IMR-90 (cell line): ENCODE measurements at regions of chr11 and their contacts with region 1.

Region 1: DNA sequence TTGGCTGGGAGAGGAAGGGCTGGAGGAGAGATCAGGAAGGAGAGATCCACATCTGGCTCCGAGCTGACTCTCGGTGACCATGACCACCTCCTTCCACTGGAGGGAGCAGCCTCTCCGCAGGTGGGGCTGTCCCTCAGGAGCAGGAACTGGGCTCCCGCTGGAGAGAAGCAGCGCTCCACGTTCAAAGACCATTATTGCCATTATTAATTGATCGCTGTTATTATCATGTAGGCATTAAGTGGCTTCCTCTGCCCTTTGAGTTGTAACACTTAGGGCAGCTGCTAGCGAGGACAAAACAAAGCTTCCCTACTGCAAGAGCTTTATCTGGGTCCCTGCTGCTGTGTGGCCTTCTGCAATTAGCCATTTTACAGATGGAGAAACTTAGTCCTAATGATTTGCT is 251.9 kb downstream of the ST3GAL4 start:
- DNase-seq: peak; percentile 66
- ATAC-seq: peak; percentile 98
- H3K4me3 ChIP-seq: no peak overlapping the region
- H3K27ac ChIP-seq: no peak overlapping the region
- H3K4me1 ChIP-seq: no peaks in the 10 kb centered on the region
- H3K27me3 ChIP-seq: no peaks in the 10 kb centered on the region
- CTCF ChIP-seq: peak; percentile 90
- POLR2A ChIP-seq: peak; percentile 48; the same call in 1 of the 2 replicates
- RAD21 ChIP-seq: peak; percentile 99

Region 2: DNA sequence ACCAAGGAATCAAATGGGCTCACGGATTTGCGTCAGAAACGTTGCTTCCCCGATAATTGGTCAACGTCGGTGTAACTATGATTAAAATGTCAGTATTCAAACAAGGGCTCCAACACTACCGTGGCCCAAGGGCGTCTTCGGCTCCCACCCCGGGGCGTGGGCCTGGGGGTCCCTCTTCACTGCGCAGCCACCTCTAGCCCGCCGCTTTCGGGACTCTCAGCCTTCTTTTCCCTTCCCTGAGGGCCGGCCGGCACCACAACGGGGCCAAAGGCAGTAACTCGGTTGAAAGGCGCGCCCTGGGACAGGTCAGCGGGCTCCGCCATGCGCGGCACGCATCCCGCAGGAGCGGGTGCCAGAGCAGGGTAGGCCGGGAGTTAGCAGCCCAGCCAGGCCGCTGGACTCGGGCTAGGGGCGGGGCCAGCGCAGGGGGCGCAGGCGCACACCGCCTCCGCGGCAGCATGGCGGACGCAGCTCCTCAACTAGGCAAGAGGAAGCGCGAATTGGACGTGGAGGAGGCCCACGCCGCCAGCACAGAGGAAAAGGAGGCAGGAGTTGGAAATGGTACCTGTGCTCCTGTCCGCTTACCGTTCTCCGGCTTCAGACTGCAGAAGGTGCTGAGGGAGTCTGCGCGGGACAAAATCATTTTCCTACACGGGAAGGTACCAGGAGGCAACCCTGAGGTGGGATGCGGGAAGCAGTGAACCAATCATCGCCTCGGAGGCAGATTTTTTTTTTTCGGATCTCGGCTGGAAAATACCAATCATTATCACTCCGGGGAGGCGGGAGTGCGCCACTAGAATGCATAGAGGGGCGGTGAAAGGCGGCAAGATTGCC is 303.5 kb before region 1 on chr11 and contains the start of gene DCPS:
- CTCF ChIA-PET with region 1: no interaction called
- POLR2A ChIA-PET with region 1: no interaction called
- dilution Hi-C with region 1: no loop called
- in situ Hi-C with region 1: loop called (anchors 10 kb)
- intact Hi-C with region 1: no loop called
- DNase-seq: peak; percentile 88
- ATAC-seq: peak; percentile 99
- H3K4me3 ChIP-seq: peak within 1 kb of the TSS; percentile 55
- H3K27ac ChIP-seq: peak within 1 kb of the TSS; percentile 85
- H3K4me1 ChIP-seq: peaks cover 3% of the 10 kb centered on the region; the same call in 1 of the 2 replicates
- H3K27me3 ChIP-seq: no peaks in the 10 kb centered on the region
- CTCF ChIP-seq: no peak
- POLR2A ChIP-seq: peak; percentile 90
- RAD21 ChIP-seq: no peak
- total RNA-seq, gene DCPS: 18.6 and 19.7 TPM in 2 replicates

Region 3: DNA sequence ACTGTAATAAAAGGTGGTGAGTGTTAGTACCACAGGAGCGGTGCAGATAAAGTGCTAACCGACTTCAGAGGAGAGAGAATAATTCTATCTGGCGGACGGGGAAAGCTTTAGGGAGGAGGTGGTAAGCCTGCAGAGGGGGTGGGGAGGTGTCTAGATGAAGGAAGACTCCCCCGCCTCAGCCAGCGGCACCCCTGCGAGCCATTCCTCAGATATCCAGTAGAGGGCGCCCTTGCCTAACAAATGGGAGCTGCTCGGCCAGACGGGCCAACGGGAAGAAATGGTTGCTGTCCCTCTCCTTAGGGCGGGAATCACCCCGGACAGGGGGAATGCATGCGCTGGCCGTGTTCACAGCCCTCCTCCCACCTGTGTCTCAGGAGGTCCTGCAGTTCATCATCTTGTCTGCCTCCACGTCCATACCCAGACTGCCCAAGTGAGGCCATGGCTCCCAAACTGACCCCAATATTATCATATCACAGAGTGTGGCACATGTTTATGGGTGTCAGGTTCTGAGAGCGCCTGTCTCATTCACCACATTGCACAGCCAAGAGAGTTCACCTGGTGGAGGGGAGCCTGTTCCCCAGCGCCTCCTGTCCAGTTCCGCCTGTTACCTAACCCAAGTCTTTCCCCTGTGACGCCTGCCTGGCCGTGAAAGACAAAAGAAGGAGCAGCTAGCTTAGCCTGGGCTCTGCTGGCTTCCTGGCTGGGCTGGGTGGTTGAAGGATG is 166.4 kb before region 1 on chr11:
- CTCF ChIA-PET with region 1: no interaction called
- POLR2A ChIA-PET with region 1: no interaction called
- dilution Hi-C with region 1: no loop called
- in situ Hi-C with region 1: no loop called
- intact Hi-C with region 1: loop called (anchors 5 kb)
- DNase-seq: peak; percentile 59
- ATAC-seq: peak; percentile 96
- H3K4me3 ChIP-seq: no peak overlapping the region
- H3K27ac ChIP-seq: no peak overlapping the region
- H3K4me1 ChIP-seq: no peaks in the 10 kb centered on the region
- H3K27me3 ChIP-seq: no peaks in the 10 kb centered on the region; the same call in 1 of the 2 replicates
- CTCF ChIP-seq: peak; percentile 96
- POLR2A ChIP-seq: no peak
- RAD21 ChIP-seq: peak; percentile 97

Region 4: DNA sequence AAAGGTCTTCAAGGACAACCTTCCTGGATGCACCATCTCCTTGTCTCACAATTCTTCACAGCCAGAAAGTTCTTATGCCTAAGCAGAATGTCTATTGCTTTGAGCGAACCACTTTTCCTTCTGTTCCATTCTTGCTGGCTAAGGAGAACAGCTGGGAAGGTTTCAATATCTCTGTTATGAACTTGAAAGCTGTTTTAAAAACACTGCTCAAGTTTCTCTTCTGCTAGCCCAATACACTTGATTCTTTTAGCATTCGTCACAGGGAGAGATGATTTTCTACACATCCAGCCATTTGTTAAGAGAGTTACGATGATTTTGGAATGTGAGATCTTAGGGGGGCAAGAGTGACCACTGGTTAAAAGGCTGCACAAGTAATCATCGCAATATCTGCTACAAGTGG is 143.9 kb after region 1 on chr11:
- CTCF ChIA-PET with region 1: interaction called, 3 read pairs
- POLR2A ChIA-PET with region 1: no interaction called
- dilution Hi-C with region 1: no loop called
- in situ Hi-C with region 1: no loop called
- intact Hi-C with region 1: loop called (anchors 1 kb)
- DNase-seq: peak; percentile 89
- ATAC-seq: peak; percentile 80
- H3K4me3 ChIP-seq: peak overlapping the region; percentile 24; the same call in 1 of the 2 replicates
- H3K27ac ChIP-seq: peak overlapping the region; percentile 86; the same call in 1 of the 2 replicates
- H3K4me1 ChIP-seq: peaks cover 8% of the 10 kb centered on the region
- H3K27me3 ChIP-seq: no peaks in the 10 kb centered on the region
- CTCF ChIP-seq: no peak
- POLR2A ChIP-seq: no peak
- RAD21 ChIP-seq: no peak

Region 5: DNA sequence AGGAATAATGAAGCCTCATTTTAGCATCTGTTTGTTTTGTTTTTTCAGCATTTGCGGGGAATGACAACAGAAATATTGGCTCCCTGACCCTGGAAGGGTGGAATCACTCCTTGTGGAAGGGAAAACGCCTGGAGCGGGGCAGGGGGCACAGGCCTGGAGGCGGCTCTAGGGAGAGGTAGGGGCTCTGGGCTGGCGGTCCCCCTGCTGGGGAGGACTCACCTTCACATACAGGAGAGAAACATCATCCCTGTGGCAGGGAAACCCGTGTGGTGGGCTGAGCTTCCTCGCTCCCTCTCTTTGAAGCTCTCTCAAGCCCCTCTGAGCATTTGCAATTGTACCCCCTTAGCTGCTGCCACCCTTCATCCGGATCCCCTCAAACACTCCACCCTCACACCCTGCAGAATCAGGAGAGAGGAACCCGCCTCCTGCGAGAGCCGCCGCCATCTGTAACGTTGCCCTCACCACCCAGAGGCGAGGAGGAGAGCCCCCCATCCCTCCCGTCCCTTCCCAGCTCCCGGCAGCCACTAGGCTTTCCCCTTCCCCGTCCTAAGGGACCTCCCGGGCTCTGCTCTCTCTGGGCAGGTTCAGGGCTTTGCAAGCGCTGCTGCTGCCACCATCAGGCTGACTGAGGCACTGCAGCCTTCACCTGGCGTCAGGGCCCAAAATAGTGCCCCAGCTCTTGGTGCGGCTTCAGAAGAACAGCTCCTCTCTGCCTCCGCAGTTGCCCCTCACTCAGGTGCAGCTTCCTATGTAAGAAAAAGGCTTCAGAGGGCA is 382.8 kb after region 1 on chr11:
- CTCF ChIA-PET with region 1: interaction called, 12 read pairs
- POLR2A ChIA-PET with region 1: no interaction called
- dilution Hi-C with region 1: no loop called
- in situ Hi-C with region 1: loop called (anchors 5 kb)
- intact Hi-C with region 1: loop called (anchors 1 kb)
- DNase-seq: peak; percentile 77
- ATAC-seq: peak; percentile 80
- H3K4me3 ChIP-seq: peak overlapping the region; percentile 27
- H3K27ac ChIP-seq: peak overlapping the region; percentile 48
- H3K4me1 ChIP-seq: peaks cover 21% of the 10 kb centered on the region
- H3K27me3 ChIP-seq: no peaks in the 10 kb centered on the region
- CTCF ChIP-seq: peak; percentile 97
- POLR2A ChIP-seq: peak; percentile 24; the same call in 1 of the 2 replicates
- RAD21 ChIP-seq: peak; percentile 93

Region 6: DNA sequence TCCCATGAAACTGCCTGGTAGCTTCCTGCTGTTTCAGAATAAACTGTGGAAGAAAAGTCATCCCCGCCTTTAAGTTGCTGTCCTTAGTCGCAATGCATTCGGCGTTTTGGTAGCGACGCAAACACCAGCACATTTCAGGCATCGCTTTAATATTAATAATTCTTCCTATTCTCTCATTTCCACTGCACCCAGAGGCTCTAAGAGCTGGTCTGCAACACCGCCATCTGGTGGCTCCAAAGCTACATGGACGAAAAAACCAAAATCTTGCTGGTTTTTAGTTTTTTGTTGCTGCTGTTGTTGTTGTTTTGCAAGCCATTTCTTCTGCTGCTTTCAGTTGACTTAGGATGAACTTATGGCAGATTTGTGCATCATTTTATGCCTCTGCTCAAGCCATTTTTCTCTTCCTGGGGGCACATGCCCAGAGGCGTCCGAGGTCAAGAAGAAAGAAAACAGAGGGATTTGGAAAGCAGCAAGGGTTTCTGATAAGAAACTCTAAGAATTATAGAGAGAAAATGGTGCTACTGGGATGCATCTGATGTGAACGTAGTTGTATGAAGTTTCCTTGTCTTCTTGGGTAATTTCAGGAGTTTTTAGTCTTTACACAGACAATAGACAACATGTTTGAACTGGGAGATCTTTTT is 738.6 kb after region 1 on chr11:
- CTCF ChIA-PET with region 1: interaction called, 3 read pairs
- POLR2A ChIA-PET with region 1: no interaction called
- dilution Hi-C with region 1: no loop called
- in situ Hi-C with region 1: loop called (anchors 25 kb)
- intact Hi-C with region 1: loop called (anchors 1 kb)
- DNase-seq: peak; percentile 33
- ATAC-seq: no peak
- H3K4me3 ChIP-seq: no peak overlapping the region
- H3K27ac ChIP-seq: no peak overlapping the region
- H3K4me1 ChIP-seq: no peaks in the 10 kb centered on the region
- H3K27me3 ChIP-seq: no peaks in the 10 kb centered on the region
- CTCF ChIP-seq: peak; percentile 75
- POLR2A ChIP-seq: no peak
- RAD21 ChIP-seq: peak; percentile 62